Activated T-helper 1 cell treated with anti-CD3 and anti-CD28 coated beads, Interleukin-12 subunit alpha, Interleukin-12 subunit beta, Interleukin-2, Interleukin-4 antibody, amounts not matched to agents 30 ng/mL and 10 ng/mL and 1 ng/mL, durations not matched to agents 14 hours and 24 hours and 36 hours (primary cell): ENCODE measurements at regions of chr10 and their contacts with region 1.

Region 1: DNA sequence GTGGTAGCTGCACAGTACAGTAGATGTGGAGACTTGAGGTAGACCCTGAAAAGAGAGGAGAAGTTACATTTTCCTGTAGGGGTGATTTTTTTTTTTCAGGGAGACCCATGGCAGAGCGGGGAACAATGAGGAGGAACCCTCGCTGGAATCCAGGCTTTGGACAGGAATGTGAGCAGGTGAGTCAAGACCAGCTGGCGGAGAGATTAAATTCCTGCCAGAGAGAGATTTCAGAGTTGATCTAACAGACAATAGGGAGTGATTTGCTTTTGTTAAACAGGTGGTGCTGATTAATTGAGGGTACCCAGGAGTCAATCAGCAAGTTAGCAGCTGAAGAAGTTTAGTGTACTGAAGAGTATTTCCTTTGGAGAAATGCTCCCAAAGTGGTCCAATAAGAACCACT is 41.6 kb upstream of the MINDY3 start:
- DNase-seq: no peak
- H3K4me3 Mint-ChIP-seq: no peak overlapping the region
- H3K27ac Mint-ChIP-seq: no peak overlapping the region
- H3K4me1 Mint-ChIP-seq: no peaks in the 10 kb centered on the region
- H3K27me3 Mint-ChIP-seq: no peaks in the 10 kb centered on the region

Region 2: DNA sequence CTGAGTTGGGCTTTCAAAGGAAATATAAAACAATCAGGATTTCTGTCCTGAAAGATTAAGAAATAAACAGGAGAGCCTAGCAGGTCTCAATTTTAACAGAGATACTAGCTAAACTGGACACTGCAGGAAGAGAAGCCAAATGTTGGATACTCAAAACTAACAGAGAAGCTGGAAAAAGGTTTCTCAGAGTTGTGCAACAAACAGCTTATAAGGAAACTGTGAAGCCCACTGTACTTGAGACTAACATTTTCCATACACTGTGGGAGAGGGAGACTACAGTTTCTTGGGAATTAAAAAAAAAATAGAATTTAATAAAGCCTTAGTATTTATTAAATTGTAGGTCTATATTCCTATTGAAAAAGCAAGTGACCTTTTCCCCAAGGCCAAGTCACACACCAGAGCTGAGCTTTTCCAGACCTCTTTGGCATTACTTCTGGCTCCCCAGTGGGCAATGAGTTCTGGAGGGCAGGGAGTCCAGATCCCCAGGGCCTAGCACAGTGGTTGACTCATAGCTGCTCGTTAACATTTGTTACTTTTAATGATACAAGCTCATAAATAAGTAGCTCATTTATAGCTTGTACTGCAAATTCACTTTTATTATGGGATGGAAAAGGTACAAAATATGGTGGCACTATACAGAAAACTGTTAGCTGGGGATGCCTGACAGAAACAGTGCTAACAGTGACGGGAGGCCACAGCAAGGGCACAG is 109.9 kb before region 1 on chr10:
- intact Hi-C with region 1: no loop called
- DNase-seq: no peak
- H3K4me3 Mint-ChIP-seq: no peak overlapping the region
- H3K27ac Mint-ChIP-seq: no peak overlapping the region
- H3K4me1 Mint-ChIP-seq: peaks cover 18% of the 10 kb centered on the region
- H3K27me3 Mint-ChIP-seq: no peaks in the 10 kb centered on the region

Region 3: DNA sequence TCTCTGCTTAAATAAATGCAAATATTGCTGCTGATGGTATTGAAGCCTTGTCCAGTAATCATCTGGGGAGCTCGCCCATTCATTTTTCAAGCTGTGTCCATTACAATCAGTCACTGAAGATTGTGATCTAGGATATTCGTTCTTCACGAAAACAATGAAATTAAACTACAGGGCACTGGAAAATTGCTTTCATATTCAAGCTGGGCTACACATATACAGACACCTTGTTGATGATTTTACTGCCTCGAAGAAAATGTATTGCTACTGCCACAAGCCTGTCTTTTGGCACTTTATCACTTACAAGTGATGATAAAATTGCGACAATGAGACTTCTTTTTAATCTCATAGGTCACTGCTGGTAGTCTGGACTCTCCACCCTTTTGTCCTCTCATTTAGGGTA is 58.4 kb after region 1 on chr10:
- intact Hi-C with region 1: loop called (anchors 1 kb)
- DNase-seq: no peak
- H3K4me3 Mint-ChIP-seq: no peak overlapping the region
- H3K27ac Mint-ChIP-seq: no peak overlapping the region
- H3K4me1 Mint-ChIP-seq: no peaks in the 10 kb centered on the region
- H3K27me3 Mint-ChIP-seq: no peaks in the 10 kb centered on the region

Region 4: DNA sequence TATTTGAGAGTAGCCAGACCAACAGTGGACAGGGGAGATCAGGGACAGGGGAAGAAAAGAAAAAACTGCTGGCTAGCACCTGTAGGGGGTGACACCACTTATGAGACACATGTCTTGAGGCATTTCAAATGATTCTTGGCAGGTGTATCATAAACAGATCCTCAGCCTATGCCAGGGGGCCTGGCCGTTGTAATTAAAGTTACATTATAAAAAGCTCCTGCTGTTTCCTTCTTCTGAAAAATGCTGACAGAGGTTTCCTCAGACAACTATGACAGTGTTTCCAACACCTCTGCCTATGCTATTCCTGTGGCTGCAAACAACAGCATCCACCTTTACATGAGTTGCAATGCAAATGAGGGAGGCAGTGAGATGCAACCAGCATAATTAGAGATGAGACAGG is 253.9 kb after region 1 on chr10:
- intact Hi-C with region 1: no loop called
- DNase-seq: no peak
- H3K4me3 Mint-ChIP-seq: no peak overlapping the region
- H3K27ac Mint-ChIP-seq: no peak overlapping the region
- H3K4me1 Mint-ChIP-seq: no peaks in the 10 kb centered on the region
- H3K27me3 Mint-ChIP-seq: peaks cover 2% of the 10 kb centered on the region

Region 5: GRCh38 chr10:16225208-16225607 is 323.3 kb after region 1 on chr10:
- intact Hi-C with region 1: no loop called
- DNase-seq: no peak
- H3K4me3 Mint-ChIP-seq: no peak overlapping the region
- H3K27ac Mint-ChIP-seq: no peak overlapping the region
- H3K4me1 Mint-ChIP-seq: no peaks in the 10 kb centered on the region
- H3K27me3 Mint-ChIP-seq: no peaks in the 10 kb centered on the region

Region 6: DNA sequence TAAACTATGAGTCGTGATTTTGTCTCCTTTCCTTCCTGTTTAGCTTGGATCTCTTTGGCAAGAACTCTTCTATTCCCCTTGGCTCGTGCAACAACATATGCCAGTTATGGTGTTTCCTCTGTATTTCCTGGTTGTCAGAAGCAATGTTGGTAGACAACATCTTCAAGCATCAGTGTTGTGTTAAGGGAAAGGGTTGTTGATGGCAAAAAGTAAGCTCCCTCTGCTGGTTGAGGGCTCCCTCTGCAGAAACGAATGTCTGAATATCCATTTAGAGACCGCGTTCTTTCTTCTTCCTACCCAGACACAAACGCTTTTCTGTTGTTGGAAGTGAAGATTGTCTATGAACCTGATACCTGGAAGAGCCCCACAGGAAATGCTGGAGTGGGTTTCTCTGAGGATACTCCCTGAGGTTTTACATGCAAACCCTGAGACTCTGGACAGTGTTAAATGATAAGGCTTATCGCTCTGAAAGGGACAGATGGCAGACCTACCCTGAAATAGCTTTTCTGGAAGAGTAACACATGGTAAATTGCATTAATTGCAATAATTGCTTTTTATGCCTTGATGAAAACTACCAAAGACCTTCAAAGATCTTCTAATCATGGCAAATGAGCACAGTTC is 643.3 kb after region 1 on chr10:
- intact Hi-C with region 1: loop called (anchors 1 kb)
- DNase-seq: no peak
- H3K4me3 Mint-ChIP-seq: no peak overlapping the region
- H3K27ac Mint-ChIP-seq: no peak overlapping the region
- H3K4me1 Mint-ChIP-seq: peaks cover 7% of the 10 kb centered on the region
- H3K27me3 Mint-ChIP-seq: peaks cover 5% of the 10 kb centered on the region

Region 7: GRCh38 chr10:16809074-16809718 is 907.3 kb after region 1 on chr10:
- intact Hi-C with region 1: loop called (anchors 1 kb)
- DNase-seq: no peak
- H3K4me3 Mint-ChIP-seq: no peak overlapping the region
- H3K27ac Mint-ChIP-seq: no peak overlapping the region
- H3K4me1 Mint-ChIP-seq: peaks cover 13% of the 10 kb centered on the region
- H3K27me3 Mint-ChIP-seq: no peaks in the 10 kb centered on the region